Activated CD4-positive, alpha-beta T cell treated with anti-CD3 and anti-CD28 coated beads, Interleukin-2, amount 10 ng/mL, durations not matched to agents 24 days and 14 days (primary cell): ENCODE measurements at regions of chr16 and their contacts with region 1.

Region 1: GRCh38 chr16:66608241-66609138 is 4.0 kb downstream of the CMTM3 start:
- DNase-seq: peak; percentile 94
- H3K4me3 Mint-ChIP-seq: peak overlapping the region; percentile 68
- H3K27ac Mint-ChIP-seq: peak overlapping the region; percentile 76
- H3K4me1 Mint-ChIP-seq: peaks cover 33% of the 10 kb centered on the region
- H3K27me3 Mint-ChIP-seq: no peaks in the 10 kb centered on the region

Region 2: GRCh38 chr16:66483689-66484481 is 124.6 kb before region 1 on chr16:
- intact Hi-C with region 1: loop called (anchors 5 kb)
- DNase-seq: peak; percentile 93
- H3K4me3 Mint-ChIP-seq: peak overlapping the region; percentile 33
- H3K27ac Mint-ChIP-seq: peak overlapping the region; percentile 31
- H3K4me1 Mint-ChIP-seq: peaks cover 23% of the 10 kb centered on the region
- H3K27me3 Mint-ChIP-seq: no peaks in the 10 kb centered on the region

Region 3: GRCh38 chr16:66552286-66553177 is 56.0 kb before region 1 on chr16 and contains the start of gene CKLF:
- intact Hi-C with region 1: loop called (anchors 1 kb)
- DNase-seq: peak; percentile 98
- H3K4me3 Mint-ChIP-seq: peak within 1 kb of the TSS; percentile 91
- H3K27ac Mint-ChIP-seq: peak within 1 kb of the TSS; percentile 95
- H3K4me1 Mint-ChIP-seq: peaks cover 68% of the 10 kb centered on the region
- H3K27me3 Mint-ChIP-seq: peaks cover 2% of the 10 kb centered on the region
- total RNA-seq, gene CKLF: 145 and 146 TPM in 2 replicates

Region 4: DNA sequence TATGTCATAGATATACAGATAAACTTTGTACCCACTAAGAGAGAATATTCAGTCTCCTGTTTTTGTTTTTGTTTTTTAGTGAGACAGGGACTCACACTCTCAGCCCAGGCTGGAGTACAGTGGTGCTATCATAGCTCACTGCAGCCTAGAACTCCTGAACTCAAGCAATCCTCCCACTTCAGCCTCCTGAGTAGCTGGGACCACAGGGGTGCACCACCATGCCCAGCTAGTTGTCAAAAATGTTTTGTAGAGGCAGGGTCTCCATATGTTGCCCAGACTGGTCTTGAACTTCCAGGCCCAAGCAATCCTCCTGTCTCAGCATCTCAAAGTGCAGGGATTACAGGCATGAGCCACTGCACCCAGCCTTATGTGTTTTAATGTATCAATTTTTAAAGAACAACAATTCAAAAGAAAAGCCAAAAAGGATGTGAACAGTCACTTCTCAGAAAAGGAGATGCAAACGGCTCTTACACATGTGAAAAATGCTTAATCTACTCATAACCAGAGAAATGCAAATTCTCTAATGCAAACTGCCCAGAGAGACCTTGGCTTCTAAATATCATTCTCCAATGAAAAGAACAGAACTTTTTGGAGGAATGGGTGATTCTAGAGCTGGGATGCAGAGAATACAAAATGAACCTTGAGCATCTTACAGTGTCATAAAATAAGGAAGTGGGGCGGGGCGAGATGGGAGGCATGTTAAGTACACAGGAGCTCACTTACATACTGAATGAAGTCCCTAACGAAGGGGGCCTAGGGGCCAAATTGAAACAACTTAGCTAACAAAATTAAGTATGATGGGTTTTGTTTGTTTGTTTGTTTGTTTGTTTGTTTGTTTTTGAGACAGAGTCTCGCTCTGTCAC is 11.3 kb before region 1 on chr16:
- intact Hi-C with region 1: loop called (anchors 1 kb)
- DNase-seq: peak; percentile 74
- H3K4me3 Mint-ChIP-seq: peak overlapping the region; percentile 47
- H3K27ac Mint-ChIP-seq: peak overlapping the region; percentile 80
- H3K4me1 Mint-ChIP-seq: peaks cover 34% of the 10 kb centered on the region
- H3K27me3 Mint-ChIP-seq: no peaks in the 10 kb centered on the region

Region 5: GRCh38 chr16:66872943-66873684 is 264.6 kb after region 1 on chr16:
- intact Hi-C with region 1: loop called (anchors 5 kb)
- DNase-seq: peak; percentile 97
- H3K4me3 Mint-ChIP-seq: peak overlapping the region; percentile 87
- H3K27ac Mint-ChIP-seq: peak overlapping the region; percentile 94
- H3K4me1 Mint-ChIP-seq: peaks cover 47% of the 10 kb centered on the region
- H3K27me3 Mint-ChIP-seq: no peaks in the 10 kb centered on the region